ENCODE measurements at regions of chr11 and their contacts with region 1.

Region 1: GRCh38 chr11:13183094-13183825 is 94.3 kb upstream of the BMAL1 start:
- DNase-seq: peak in 4 of 5 donors; percentile 12 to 32 (median 24)
- H3K4me3 ChIP-seq: no peak overlapping the region
- H3K4me3 Mint-ChIP-seq: peak overlapping the region in 7 of 8 donors; percentile 44 to 65 (median 60)
- H3K27ac ChIP-seq: no peak overlapping the region
- H3K27ac Mint-ChIP-seq: no peak overlapping the region
- H3K4me1 ChIP-seq: peaks cover 7% of the 10 kb centered on the region
- H3K4me1 Mint-ChIP-seq: peaks cover 3 to 6% (median 6%) of the 10 kb centered on the region in 4 donors
- H3K27me3 ChIP-seq: no peaks in the 10 kb centered on the region
- H3K27me3 Mint-ChIP-seq: peaks cover 8 to 12% of the 10 kb centered on the region in 2 donors

Region 2: GRCh38 chr11:12963792-12964536 is 219.3 kb before region 1 on chr11:
- CTCF ChIA-PET with region 1: interaction called, 4 read pairs
- POLR2A ChIA-PET with region 1: no interaction called
- intact Hi-C with region 1: loop called (anchors 2 kb)
- DNase-seq: peak; percentile 41 to 60 (median 52)
- H3K4me3 ChIP-seq: no peak overlapping the region
- H3K4me3 Mint-ChIP-seq: no peak overlapping the region
- H3K27ac ChIP-seq: no peak overlapping the region
- H3K27ac Mint-ChIP-seq: peak overlapping the region in 1 of 7 donors; percentile 31
- H3K4me1 ChIP-seq: no peaks in the 10 kb centered on the region
- H3K4me1 Mint-ChIP-seq: no peaks in the 10 kb centered on the region
- H3K27me3 ChIP-seq: no peaks in the 10 kb centered on the region
- H3K27me3 Mint-ChIP-seq: peaks cover 18 to 21% of the 10 kb centered on the region in 2 donors

Region 3: DNA sequence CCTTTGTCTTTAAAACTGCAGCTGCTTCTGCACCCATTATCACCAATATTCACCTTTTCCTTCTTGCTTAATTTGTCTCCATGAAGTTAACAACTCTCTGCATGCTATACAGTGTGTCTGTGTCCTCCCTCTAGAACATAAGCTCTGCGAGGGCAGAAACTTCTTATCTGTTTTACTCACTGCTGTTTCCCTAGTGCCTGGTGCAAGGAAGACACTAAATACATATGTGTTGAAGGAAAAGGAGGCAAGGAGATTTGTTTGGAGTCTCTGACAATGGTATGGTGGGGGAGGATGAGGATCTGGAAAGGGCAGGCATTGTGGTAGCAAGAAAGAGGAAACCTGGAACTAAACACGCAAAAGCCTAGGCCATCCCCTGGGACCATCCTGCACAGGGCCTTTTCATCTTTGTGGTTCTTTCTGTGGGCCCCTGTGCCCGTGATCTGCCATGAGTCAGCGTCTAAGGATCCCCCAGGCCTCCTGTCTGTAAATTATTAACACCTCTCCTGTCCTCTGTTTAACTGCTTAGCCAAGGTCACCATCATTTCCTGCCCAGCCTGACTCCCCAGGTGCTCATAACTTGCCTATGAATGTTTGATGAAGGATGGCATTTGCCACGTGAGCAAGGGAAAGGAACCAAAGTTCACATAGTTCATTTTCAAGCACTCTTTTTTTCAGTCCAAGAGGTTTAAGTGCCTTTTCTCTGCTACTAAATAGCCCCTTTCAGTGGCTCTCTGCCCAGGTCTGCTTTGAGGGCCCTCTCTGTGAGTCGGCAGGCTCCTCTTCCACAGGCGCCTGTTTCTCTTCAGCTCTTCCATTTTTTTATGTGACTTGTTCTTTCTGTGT is 43.0 kb before region 1 on chr11:
- CTCF ChIA-PET with region 1: no interaction called
- POLR2A ChIA-PET with region 1: no interaction called
- intact Hi-C with region 1: no loop called
- DNase-seq: no peak
- H3K4me3 ChIP-seq: no peak overlapping the region
- H3K4me3 Mint-ChIP-seq: no peak overlapping the region
- H3K27ac ChIP-seq: no peak overlapping the region
- H3K27ac Mint-ChIP-seq: no peak overlapping the region
- H3K4me1 ChIP-seq: no peaks in the 10 kb centered on the region
- H3K4me1 Mint-ChIP-seq: no peaks in the 10 kb centered on the region
- H3K27me3 ChIP-seq: no peaks in the 10 kb centered on the region
- H3K27me3 Mint-ChIP-seq: peaks cover 26 to 34% of the 10 kb centered on the region in 2 donors

Region 4: GRCh38 chr11:13216019-13216710 is 32.9 kb after region 1 on chr11:
- CTCF ChIA-PET with region 1: no interaction called
- POLR2A ChIA-PET with region 1: no interaction called
- intact Hi-C with region 1: no loop called
- DNase-seq: no peak
- H3K4me3 ChIP-seq: no peak overlapping the region
- H3K4me3 Mint-ChIP-seq: no peak overlapping the region
- H3K27ac ChIP-seq: no peak overlapping the region
- H3K27ac Mint-ChIP-seq: no peak overlapping the region
- H3K4me1 ChIP-seq: no peaks in the 10 kb centered on the region
- H3K4me1 Mint-ChIP-seq: no peaks in the 10 kb centered on the region
- H3K27me3 ChIP-seq: no peaks in the 10 kb centered on the region
- H3K27me3 Mint-ChIP-seq: no peaks in the 10 kb centered on the region

Region 5: GRCh38 chr11:13238879-13239514 is 55.7 kb after region 1 on chr11:
- CTCF ChIA-PET with region 1: interaction called, 4 read pairs
- POLR2A ChIA-PET with region 1: no interaction called
- intact Hi-C with region 1: loop called (anchors 1 kb)
- DNase-seq: peak; percentile 45 to 61 (median 54)
- H3K4me3 ChIP-seq: no peak overlapping the region
- H3K4me3 Mint-ChIP-seq: no peak overlapping the region
- H3K27ac ChIP-seq: no peak overlapping the region
- H3K27ac Mint-ChIP-seq: peak overlapping the region in 1 of 7 donors; percentile 63
- H3K4me1 ChIP-seq: no peaks in the 10 kb centered on the region
- H3K4me1 Mint-ChIP-seq: peaks cover 0 to 3% (median 1%) of the 10 kb centered on the region in 4 donors
- H3K27me3 ChIP-seq: peaks cover 8% of the 10 kb centered on the region
- H3K27me3 Mint-ChIP-seq: peaks cover 7 to 15% of the 10 kb centered on the region in 2 donors

Region 6: DNA sequence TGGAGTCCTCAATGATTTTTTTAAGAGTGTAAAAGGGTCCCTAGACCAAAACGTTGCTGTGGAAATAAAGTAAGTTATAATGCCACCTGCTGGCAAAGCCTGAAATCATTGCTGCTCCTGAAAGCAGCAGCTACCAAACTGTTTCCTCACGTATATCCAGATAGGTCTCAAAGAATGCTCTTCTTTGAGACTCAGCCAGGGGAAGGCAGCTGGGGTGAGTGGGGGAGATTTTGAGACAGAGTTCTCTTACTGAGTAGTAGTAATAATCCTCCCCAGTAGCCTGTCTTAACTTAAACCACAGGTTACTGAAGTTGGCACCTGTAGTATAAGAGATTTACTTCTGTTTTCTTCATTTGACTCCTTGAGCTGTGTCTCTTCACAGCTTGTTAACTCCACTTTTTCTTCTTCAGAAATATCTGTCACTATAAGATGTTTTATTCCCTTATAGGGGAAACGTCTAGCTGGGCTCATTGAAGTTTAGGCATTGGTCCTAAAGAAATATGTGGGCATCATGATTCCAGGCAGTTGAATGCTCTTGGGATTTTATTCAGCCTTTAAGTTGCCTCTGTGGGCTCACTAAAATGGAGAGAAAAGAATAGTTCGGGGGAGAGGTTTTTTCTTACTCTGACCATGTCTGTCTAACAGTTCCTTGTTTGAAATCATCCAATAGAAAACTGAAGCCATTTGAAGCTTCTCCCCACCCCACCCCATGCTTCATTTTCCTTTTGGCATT is 201.8 kb after region 1 on chr11:
- CTCF ChIA-PET with region 1: interaction called, 8 read pairs
- POLR2A ChIA-PET with region 1: no interaction called
- intact Hi-C with region 1: loop called (anchors 1 kb)
- DNase-seq: peak in 2 of 5 donors; percentile 11 to 16
- H3K4me3 ChIP-seq: no peak overlapping the region
- H3K4me3 Mint-ChIP-seq: no peak overlapping the region
- H3K27ac ChIP-seq: no peak overlapping the region
- H3K27ac Mint-ChIP-seq: peak overlapping the region; percentile 4 to 68 (median 57)
- H3K4me1 ChIP-seq: no peaks in the 10 kb centered on the region
- H3K4me1 Mint-ChIP-seq: peaks cover 0 to 1% (median 0%) of the 10 kb centered on the region in 4 donors
- H3K27me3 ChIP-seq: no peaks in the 10 kb centered on the region
- H3K27me3 Mint-ChIP-seq: no peaks in the 10 kb centered on the region